A673 (cell line): ENCODE measurements at regions of chr11 and their contacts with region 1.

Region 1: GRCh38 chr11:86408845-86409244 is 34.2 kb downstream of the CCDC81 start:
- DNase-seq: no peak
- H3K4me3 ChIP-seq: no peak overlapping the region
- H3K27ac ChIP-seq: no peak overlapping the region
- H3K4me1 ChIP-seq: no peaks in the 10 kb centered on the region
- H3K27me3 ChIP-seq: no peaks in the 10 kb centered on the region
- CTCF ChIP-seq: peak; percentile 33; the same call in 1 of the 2 replicates

Region 2: GRCh38 chr11:86138958-86139357 is 269.9 kb before region 1 on chr11:
- CTCF ChIA-PET with region 1: no interaction called
- POLR2A ChIA-PET with region 1: no interaction called
- intact Hi-C with region 1: loop called (anchors 10 kb)
- DNase-seq: no peak
- H3K4me3 ChIP-seq: no peak overlapping the region
- H3K27ac ChIP-seq: no peak overlapping the region
- H3K4me1 ChIP-seq: no peaks in the 10 kb centered on the region
- H3K27me3 ChIP-seq: no peaks in the 10 kb centered on the region
- CTCF ChIP-seq: no peak

Region 3: GRCh38 chr11:86418917-86419316 is 10.1 kb after region 1 on chr11:
- CTCF ChIA-PET with region 1: no interaction called
- POLR2A ChIA-PET with region 1: no interaction called
- intact Hi-C with region 1: no loop called
- DNase-seq: peak; percentile 18
- H3K4me3 ChIP-seq: no peak overlapping the region
- H3K27ac ChIP-seq: no peak overlapping the region
- H3K4me1 ChIP-seq: no peaks in the 10 kb centered on the region
- H3K27me3 ChIP-seq: no peaks in the 10 kb centered on the region
- CTCF ChIP-seq: peak; percentile 41

Region 4: DNA sequence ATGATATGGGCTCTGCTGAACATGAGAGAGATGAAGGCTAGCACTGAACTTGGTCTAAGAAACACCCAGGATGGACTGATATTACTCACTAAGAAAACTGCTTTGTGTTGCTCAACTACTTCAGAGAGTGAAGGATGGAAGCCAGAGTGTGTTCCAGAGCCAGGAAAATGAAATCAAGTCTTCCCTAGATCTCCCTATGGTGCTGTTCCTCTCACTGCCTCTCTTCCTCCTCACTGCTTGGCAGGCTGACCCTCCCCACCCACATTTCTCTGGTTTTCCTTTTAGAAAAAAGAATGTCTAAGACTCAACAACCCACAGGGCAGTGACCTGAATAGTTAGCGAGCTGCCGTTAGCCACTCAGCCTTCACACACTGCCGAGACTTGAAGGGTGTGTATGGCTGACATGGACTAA is 31.5 kb after region 1 on chr11:
- CTCF ChIA-PET with region 1: no interaction called
- POLR2A ChIA-PET with region 1: no interaction called
- intact Hi-C with region 1: loop called (anchors 1 kb)
- DNase-seq: no peak
- H3K4me3 ChIP-seq: no peak overlapping the region
- H3K27ac ChIP-seq: no peak overlapping the region
- H3K4me1 ChIP-seq: peaks cover 20% of the 10 kb centered on the region
- H3K27me3 ChIP-seq: no peaks in the 10 kb centered on the region
- CTCF ChIP-seq: no peak